Naive thymus-derived CD4-positive, alpha-beta T cell (primary cell): ENCODE measurements at regions of chr11 and their contacts with region 1.

Region 1: GRCh38 chr11:49995565-49995964 is 13.2 kb upstream of the OR4C12 start:
- DNase-seq: peak in 3 of 9 donors; percentile 0 to 1 (median 1)
- ATAC-seq: no peak
- H3K4me3 ChIP-seq: no peak overlapping the region
- H3K4me3 Mint-ChIP-seq: no peak overlapping the region
- H3K27ac ChIP-seq: no peak overlapping the region
- H3K27ac Mint-ChIP-seq: no peak overlapping the region
- H3K4me1 ChIP-seq: no peaks in the 10 kb centered on the region
- H3K4me1 Mint-ChIP-seq: no peaks in the 10 kb centered on the region
- H3K27me3 ChIP-seq: no peaks in the 10 kb centered on the region
- H3K27me3 Mint-ChIP-seq: no peaks in the 10 kb centered on the region

Region 2: GRCh38 chr11:48307760-48308386 is 1687.7 kb before region 1 on chr11:
- CTCF ChIA-PET with region 1: no interaction called
- POLR2A ChIA-PET with region 1: no interaction called
- intact Hi-C with region 1: loop called in 1 of 2 experiments (anchors 5 kb)
- DNase-seq: peak in 8 of 9 donors; percentile 11 to 62 (median 52)
- ATAC-seq: peak; percentile 62
- H3K4me3 ChIP-seq: no peak overlapping the region
- H3K4me3 Mint-ChIP-seq: no peak overlapping the region
- H3K27ac ChIP-seq: no peak overlapping the region
- H3K27ac Mint-ChIP-seq: no peak overlapping the region
- H3K4me1 ChIP-seq: no peaks in the 10 kb centered on the region
- H3K4me1 Mint-ChIP-seq: peaks cover 0 to 9% (median 0%) of the 10 kb centered on the region in 7 donors
- H3K27me3 ChIP-seq: no peaks in the 10 kb centered on the region
- H3K27me3 Mint-ChIP-seq: peaks cover 2 to 22% (median 10%) of the 10 kb centered on the region in 5 donors

Region 3: DNA sequence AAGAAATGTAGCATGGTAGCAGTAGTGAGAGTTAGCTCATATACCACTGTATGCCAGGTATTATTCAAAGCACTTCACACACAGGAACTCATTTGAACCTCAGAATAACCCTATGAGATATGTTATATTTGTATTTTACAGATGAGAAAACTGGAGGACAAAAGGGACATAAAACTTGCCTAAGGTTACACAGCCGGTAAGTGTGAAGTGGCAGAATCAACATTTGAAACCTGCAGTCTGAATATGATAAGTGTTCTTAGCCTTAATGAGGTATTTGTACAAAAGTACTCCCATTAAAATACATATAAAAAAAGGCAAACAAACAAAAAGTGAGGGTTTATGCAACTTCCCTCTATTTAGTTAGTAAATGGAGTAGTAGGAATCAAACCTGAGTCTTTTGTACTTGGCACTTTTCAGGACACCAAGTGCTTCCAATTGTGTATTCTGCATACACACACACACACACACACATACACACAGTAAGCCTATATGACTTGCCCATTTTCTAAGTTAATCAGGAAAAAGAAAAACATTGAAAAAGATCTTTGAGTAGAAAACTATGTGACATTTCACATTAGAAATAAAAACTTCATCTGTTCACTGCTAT is 563.2 kb before region 1 on chr11:
- CTCF ChIA-PET with region 1: no interaction called
- POLR2A ChIA-PET with region 1: no interaction called
- intact Hi-C with region 1: no loop called
- DNase-seq: no peak
- ATAC-seq: no peak
- H3K4me3 ChIP-seq: no peak overlapping the region
- H3K4me3 Mint-ChIP-seq: no peak overlapping the region
- H3K27ac ChIP-seq: no peak overlapping the region
- H3K27ac Mint-ChIP-seq: no peak overlapping the region
- H3K4me1 ChIP-seq: no peaks in the 10 kb centered on the region
- H3K4me1 Mint-ChIP-seq: no peaks in the 10 kb centered on the region
- H3K27me3 ChIP-seq: no peaks in the 10 kb centered on the region
- H3K27me3 Mint-ChIP-seq: no peaks in the 10 kb centered on the region

Region 4: DNA sequence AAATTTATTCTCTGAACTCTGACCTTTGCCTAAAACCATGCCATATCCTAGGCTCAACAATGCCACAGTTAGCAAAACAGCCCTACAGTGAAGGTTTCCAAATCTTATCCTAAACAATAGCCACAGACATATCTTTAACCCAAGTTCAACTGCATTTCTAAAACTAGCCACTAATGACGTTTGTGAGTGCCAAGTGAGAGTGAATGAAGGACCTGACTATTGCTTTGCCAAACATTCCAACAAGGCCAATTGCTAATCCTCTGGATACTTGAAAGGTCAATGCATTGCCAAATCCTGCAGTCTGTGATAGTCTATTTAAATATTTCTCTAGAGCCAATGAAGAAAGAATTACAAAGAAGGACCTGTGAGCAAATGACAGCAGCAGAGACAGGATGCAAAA is 34.6 kb after region 1 on chr11:
- CTCF ChIA-PET with region 1: no interaction called
- POLR2A ChIA-PET with region 1: no interaction called
- intact Hi-C with region 1: no loop called
- DNase-seq: no peak
- ATAC-seq: no peak
- H3K4me3 ChIP-seq: no peak overlapping the region
- H3K4me3 Mint-ChIP-seq: no peak overlapping the region
- H3K27ac ChIP-seq: no peak overlapping the region
- H3K27ac Mint-ChIP-seq: no peak overlapping the region
- H3K4me1 ChIP-seq: no peaks in the 10 kb centered on the region
- H3K4me1 Mint-ChIP-seq: no peaks in the 10 kb centered on the region
- H3K27me3 ChIP-seq: no peaks in the 10 kb centered on the region
- H3K27me3 Mint-ChIP-seq: no peaks in the 10 kb centered on the region